PC-3 (cell line): ENCODE measurements at regions of chr6 and their contacts with region 1.

Region 1: DNA sequence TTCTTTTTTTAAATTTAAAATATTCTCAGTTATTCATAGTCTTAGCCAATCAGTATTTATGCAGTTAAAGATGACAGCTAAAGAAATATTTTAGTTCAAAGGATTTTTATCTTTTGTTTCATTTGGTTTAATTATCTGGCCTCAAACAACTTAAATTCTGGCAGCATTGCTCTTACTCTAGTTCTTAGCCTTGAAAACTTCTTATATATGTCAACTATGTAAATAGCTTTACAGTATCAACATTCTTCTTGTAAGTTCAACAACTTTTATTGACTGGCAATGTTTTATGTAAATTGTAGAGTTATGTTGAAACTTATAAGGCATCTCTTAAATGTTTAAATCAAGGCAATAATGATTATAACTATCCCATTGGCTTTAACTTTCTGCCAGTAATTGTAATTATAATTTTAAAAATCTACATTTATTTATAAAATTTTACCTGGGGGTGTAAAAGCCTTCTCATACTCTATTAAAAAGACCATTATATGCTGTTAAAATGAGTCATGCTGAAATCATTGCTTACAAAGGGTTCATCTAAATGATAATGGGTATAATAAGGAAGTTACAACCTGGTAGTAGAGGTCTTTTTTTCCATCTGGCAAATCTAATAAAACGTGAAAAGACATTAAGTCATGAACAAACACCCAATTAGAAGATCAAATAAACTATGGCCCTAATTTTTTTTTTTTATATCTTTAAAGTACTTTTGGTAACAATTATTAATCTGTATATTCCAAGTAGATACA is 45.8 kb upstream of the FAM184A start:
- DNase-seq: peak; percentile 70
- ATAC-seq: peak; percentile 73
- H3K4me3 ChIP-seq: no peak overlapping the region
- H3K27ac ChIP-seq: peak overlapping the region; percentile 49
- H3K4me1 ChIP-seq: peaks cover 20% of the 10 kb centered on the region
- H3K27me3 ChIP-seq: no peaks in the 10 kb centered on the region
- CTCF ChIP-seq: no peak

Region 2: DNA sequence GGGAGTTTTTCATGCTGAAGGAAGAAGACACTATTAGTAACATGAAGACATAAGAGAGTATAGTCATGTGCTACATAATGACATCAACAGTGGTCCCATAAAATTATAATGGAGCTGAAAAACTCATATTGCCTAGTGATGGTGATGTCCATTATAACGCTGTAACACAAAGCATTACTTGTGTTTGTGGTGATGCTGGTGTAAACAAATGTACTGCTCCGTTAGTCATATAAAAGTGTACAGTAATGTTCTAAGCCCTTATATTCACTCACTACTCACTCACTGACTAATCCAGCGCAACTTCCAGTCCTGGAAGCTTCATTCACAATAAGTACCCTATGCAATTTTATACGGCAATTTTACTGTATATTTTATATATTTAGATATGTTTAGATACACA is 257.1 kb before region 1 on chr6:
- CTCF ChIA-PET with region 1: no interaction called
- POLR2A ChIA-PET with region 1: no interaction called
- intact Hi-C with region 1: loop called (anchors 1 kb)
- DNase-seq: peak; percentile 85
- ATAC-seq: peak; percentile 94
- H3K4me3 ChIP-seq: no peak overlapping the region
- H3K27ac ChIP-seq: peak overlapping the region; percentile 95
- H3K4me1 ChIP-seq: peaks cover 21% of the 10 kb centered on the region
- H3K27me3 ChIP-seq: no peaks in the 10 kb centered on the region
- CTCF ChIP-seq: no peak

Region 3: DNA sequence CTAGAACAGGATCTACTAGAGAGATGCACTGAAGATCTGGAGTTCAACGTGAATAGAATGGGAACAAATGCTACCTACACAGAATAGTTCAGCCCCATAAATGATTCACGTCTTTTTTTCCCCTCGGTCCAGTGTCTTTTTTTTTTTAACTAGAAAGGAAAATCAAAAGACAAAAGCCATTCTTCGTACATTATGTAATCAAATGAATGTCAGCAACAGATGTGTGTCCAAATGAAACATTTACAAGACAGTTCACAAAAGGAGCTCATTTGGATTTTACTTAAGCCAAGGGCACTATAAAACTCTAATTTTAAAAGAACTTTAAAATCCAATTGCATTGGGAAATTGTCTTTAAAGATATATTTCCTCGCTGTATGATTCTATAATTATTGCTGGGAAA is 88.2 kb before region 1 on chr6:
- CTCF ChIA-PET with region 1: no interaction called
- POLR2A ChIA-PET with region 1: interaction called, 12 read pairs
- intact Hi-C with region 1: no loop called
- DNase-seq: no peak
- ATAC-seq: no peak
- H3K4me3 ChIP-seq: no peak overlapping the region
- H3K27ac ChIP-seq: no peak overlapping the region
- H3K4me1 ChIP-seq: no peaks in the 10 kb centered on the region
- H3K27me3 ChIP-seq: no peaks in the 10 kb centered on the region
- CTCF ChIP-seq: no peak

Region 4: DNA sequence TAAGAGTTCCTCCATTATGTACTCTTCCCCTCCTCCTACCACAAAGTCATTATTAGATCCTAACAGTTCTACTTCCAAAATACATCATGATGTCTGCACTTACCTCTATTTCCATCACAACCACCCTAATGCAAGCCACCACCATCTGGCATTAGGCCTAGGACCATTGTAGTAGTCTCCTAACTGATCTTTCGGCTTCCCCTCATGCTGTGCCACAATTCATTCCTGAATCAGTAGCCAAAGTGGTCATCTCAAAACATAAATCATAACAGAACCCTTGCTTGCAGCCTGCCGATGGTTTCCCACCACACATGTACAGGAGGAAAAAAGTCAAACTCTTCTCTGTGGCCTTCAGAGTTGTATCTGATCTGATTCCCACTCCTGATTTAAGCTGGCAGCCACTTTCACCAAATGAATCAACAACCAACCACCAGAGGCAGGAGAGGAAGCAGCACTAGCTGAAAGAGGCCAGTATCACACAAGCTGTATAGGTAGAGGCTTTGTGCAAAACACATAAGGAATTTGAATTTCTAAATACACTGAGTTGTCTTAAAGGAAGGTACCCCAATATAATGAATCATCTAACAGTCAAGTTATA is 71.9 kb before region 1 on chr6:
- CTCF ChIA-PET with region 1: no interaction called
- POLR2A ChIA-PET with region 1: no interaction called
- intact Hi-C with region 1: no loop called
- DNase-seq: no peak
- ATAC-seq: no peak
- H3K4me3 ChIP-seq: no peak overlapping the region
- H3K27ac ChIP-seq: no peak overlapping the region
- H3K4me1 ChIP-seq: no peaks in the 10 kb centered on the region
- H3K27me3 ChIP-seq: no peaks in the 10 kb centered on the region
- CTCF ChIP-seq: no peak